ENCODE measurements at regions of chr20 and their contacts with region 1.

Region 1: GRCh38 chr20:57383447-57384347 is 7.5 kb upstream of the RBM38 start:
- DNase-seq: no peak
- ATAC-seq: no peak
- H3K4me3 ChIP-seq: no peak overlapping the region
- H3K27ac ChIP-seq: no peak overlapping the region
- H3K4me1 ChIP-seq: peaks cover under 1% of the 10 kb centered on the region; the same call in 1 of the 2 replicates
- H3K27me3 ChIP-seq: no peaks in the 10 kb centered on the region
- CTCF ChIP-seq: no peak

Region 2: GRCh38 chr20:57425150-57426013 is 41.7 kb after region 1 on chr20:
- CTCF ChIA-PET with region 1: no interaction called
- POLR2A ChIA-PET with region 1: no interaction called
- intact Hi-C with region 1: no loop called
- DNase-seq: no peak
- ATAC-seq: peak; percentile 19; the same call in 1 of the 2 replicates
- H3K4me3 ChIP-seq: no peak overlapping the region
- H3K27ac ChIP-seq: no peak overlapping the region
- H3K4me1 ChIP-seq: peaks cover 4% of the 10 kb centered on the region; the same call in 1 of the 2 replicates
- H3K27me3 ChIP-seq: no peaks in the 10 kb centered on the region
- CTCF ChIP-seq: no peak

Region 3: DNA sequence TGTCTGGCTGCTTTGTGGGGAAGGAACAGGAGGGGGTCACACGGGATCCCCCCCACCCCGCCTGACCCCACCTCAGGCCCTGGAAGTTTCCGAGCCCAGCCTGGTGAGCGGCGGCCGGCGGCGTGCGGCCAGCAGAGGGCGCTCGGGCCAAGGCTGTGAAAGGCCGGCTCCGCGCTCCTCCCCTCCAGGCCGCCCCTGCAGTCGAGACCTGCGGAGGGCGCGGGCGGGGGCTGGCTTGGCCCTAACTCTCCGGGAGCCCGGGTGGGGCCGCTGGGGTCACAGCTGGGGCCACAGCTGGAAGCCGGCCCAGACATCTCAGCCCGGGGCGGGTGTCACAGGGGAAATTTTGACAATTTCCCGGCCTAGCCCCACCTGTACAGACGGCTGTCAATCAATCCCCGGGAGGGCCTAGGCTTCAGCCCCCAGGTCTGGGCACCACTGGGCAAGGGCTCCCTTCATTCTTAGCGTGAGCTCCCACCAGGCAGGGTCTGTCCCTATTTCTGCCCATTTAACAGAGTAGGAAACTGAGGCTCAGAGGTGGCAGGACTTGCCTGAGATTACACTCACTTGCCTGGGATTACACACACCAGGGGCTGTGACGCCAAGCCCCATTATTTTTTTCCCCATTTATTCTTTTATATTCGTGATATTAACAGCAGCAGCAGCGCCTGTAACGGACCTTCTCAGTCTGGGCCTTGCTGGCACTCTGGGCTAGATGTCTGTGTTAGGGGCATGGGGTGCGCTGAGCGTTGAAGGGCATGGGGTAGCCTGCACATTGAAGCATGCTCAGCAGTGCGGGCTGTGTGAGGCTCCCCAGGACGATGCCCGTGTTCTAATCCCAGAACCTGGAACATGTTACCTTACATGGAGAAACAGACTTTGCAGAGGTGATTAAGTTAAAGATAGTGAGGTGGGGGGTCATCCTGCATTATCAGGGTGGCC is 213.6 kb after region 1 on chr20:
- CTCF ChIA-PET with region 1: no interaction called
- POLR2A ChIA-PET with region 1: no interaction called
- intact Hi-C with region 1: loop called (anchors 5 kb)
- DNase-seq: peak; percentile 72
- ATAC-seq: peak; percentile 79
- H3K4me3 ChIP-seq: peak overlapping the region; percentile 62
- H3K27ac ChIP-seq: no peak overlapping the region
- H3K4me1 ChIP-seq: peaks cover 18% of the 10 kb centered on the region
- H3K27me3 ChIP-seq: no peaks in the 10 kb centered on the region
- CTCF ChIP-seq: peak; percentile 98

Region 4: DNA sequence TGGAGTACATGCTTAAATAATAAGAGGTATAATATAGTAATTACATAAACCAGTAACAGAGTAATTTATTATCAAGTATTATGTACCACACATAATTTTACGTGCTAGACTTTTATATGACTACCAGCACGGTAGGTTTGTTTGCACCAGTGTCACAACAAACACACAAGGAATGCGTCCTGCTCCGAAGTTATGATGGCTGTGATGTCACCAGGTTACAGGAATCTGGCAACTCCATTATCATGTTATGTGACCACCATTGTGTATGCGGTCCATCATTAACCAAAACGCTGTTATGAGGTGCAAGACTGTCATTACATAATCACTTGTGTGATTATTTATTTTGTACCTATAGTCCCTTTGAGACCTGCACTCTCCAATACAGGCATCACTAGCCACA is 561.3 kb after region 1 on chr20:
- CTCF ChIA-PET with region 1: interaction called, 14 read pairs
- POLR2A ChIA-PET with region 1: no interaction called
- intact Hi-C with region 1: no loop called
- DNase-seq: no peak
- ATAC-seq: no peak
- H3K4me3 ChIP-seq: no peak overlapping the region
- H3K27ac ChIP-seq: no peak overlapping the region
- H3K4me1 ChIP-seq: peaks cover 22% of the 10 kb centered on the region
- H3K27me3 ChIP-seq: no peaks in the 10 kb centered on the region
- CTCF ChIP-seq: no peak

Measured in PC-3 (cell line).